Naive thymus-derived CD4-positive, alpha-beta T cell (primary cell): ENCODE measurements at regions of chr11 and their contacts with region 1.

Region 1: DNA sequence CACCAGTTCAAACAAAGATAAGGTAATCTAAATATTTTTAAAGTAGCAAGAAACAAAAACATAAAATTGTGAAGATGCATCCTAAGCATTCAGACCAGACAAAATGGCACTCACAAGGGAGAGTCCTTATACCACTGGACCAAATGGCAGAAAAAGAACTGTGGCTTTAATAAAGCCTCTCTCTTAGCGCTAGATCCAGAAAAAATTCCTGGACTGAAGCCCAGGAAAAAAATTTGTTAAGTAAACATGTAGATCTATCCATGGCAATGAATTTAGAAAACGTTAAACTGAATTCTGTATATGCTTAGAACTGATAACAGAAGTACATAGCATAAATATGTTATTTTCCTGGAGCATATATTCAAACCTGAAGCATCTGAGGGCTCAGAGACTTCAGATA is 11.8 kb upstream of the CD59 start:
- DNase-seq: no peak
- ATAC-seq: no peak
- H3K4me3 ChIP-seq: no peak overlapping the region
- H3K4me3 Mint-ChIP-seq: no peak overlapping the region
- H3K27ac ChIP-seq: no peak overlapping the region
- H3K27ac Mint-ChIP-seq: peak overlapping the region in 1 of 9 donors; percentile 28
- H3K4me1 ChIP-seq: no peaks in the 10 kb centered on the region
- H3K4me1 Mint-ChIP-seq: no peaks in the 10 kb centered on the region
- H3K27me3 ChIP-seq: no peaks in the 10 kb centered on the region
- H3K27me3 Mint-ChIP-seq: no peaks in the 10 kb centered on the region

Region 2: GRCh38 chr11:33761471-33761870 is 13.5 kb after region 1 on chr11:
- CTCF ChIA-PET with region 1: no interaction called
- POLR2A ChIA-PET with region 1: interaction called, 3 read pairs
- intact Hi-C with region 1: loop called in 1 of 2 experiments (anchors 2 kb)
- DNase-seq: no peak
- ATAC-seq: no peak
- H3K4me3 ChIP-seq: no peak overlapping the region
- H3K4me3 Mint-ChIP-seq: no peak overlapping the region
- H3K27ac ChIP-seq: no peak overlapping the region
- H3K27ac Mint-ChIP-seq: no peak overlapping the region
- H3K4me1 ChIP-seq: peaks cover 0 to 7% of the 10 kb centered on the region in 2 donors
- H3K4me1 Mint-ChIP-seq: peaks cover 8 to 55% (median 33%) of the 10 kb centered on the region in 7 donors
- H3K27me3 ChIP-seq: no peaks in the 10 kb centered on the region
- H3K27me3 Mint-ChIP-seq: no peaks in the 10 kb centered on the region